Panc1 (cell line): ENCODE measurements at regions of chr6 and their contacts with region 1.

Region 1: GRCh38 chr6:29589423-29590048 is 4.6 kb downstream of the OR2H2 start:
- DNase-seq: peak; percentile 67
- ATAC-seq: peak; percentile 85
- H3K4me3 ChIP-seq: no peak overlapping the region
- H3K27ac ChIP-seq: no peak overlapping the region
- H3K4me1 ChIP-seq: no peaks in the 10 kb centered on the region
- H3K27me3 ChIP-seq: peaks cover 12% of the 10 kb centered on the region
- CTCF ChIP-seq: peak; percentile 94

Region 2: DNA sequence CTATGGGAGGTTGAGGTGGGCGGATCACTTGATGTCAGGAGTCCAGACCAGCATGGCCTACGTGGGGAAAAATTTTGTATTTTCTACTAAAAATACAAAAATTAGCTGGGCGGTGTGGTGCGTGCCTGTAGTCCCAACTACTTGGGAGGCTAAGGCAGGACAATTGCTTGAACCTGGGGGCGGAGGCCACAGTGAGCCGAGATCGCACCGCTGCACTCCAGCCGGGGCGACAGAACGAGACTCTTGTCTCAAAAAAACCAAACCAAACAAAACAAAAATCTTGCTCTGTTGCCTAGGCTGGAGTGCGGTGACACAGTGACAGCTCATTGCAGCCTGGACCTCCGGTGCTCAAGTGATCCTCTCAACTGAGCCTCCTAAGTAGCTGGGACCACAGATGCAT is 560.7 kb before region 1 on chr6:
- CTCF ChIA-PET with region 1: no interaction called
- POLR2A ChIA-PET with region 1: no interaction called
- in situ Hi-C with region 1: no loop called
- intact Hi-C with region 1: loop called (anchors 10 kb)
- DNase-seq: no peak
- ATAC-seq: no peak
- H3K4me3 ChIP-seq: no peak overlapping the region
- H3K27ac ChIP-seq: no peak overlapping the region
- H3K4me1 ChIP-seq: no peaks in the 10 kb centered on the region
- H3K27me3 ChIP-seq: peaks cover 10% of the 10 kb centered on the region
- CTCF ChIP-seq: no peak